ENCODE measurements at regions of chr6 and their contacts with region 1.

Region 1: DNA sequence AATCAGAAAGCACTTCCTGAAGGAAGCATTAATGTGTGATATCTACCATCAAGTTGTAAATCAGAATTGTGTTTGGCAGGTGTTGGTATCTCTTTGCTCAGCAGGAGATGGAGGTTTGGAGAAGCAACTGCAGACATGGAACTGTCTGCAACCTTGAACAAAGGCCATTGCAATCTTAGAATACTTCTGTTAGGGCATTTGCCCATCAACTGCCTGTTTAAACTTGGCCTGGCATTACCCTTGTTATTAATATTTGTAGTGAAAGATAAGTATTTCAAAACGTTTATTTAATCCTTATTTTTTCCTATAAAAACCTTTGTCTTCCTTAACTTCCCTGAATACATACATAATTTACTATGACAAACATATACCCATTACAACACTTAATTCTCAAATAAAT is 14.1 kb downstream of the GSTA5 start:
- DNase-seq: no peak
- H3K4me3 ChIP-seq: no peak overlapping the region
- H3K27ac ChIP-seq: no peak overlapping the region
- H3K4me1 ChIP-seq: no peaks in the 10 kb centered on the region
- H3K27me3 ChIP-seq: peaks cover 0 to 6% (median 0%) of the 10 kb centered on the region in 7 donors
- CTCF ChIP-seq: no peak
- POLR2A ChIP-seq: no peak

Region 2: GRCh38 chr6:51805517-51805916 is 1021.0 kb before region 1 on chr6:
- intact Hi-C with region 1: no loop called
- DNase-seq: no peak
- H3K4me3 ChIP-seq: no peak overlapping the region
- H3K27ac ChIP-seq: no peak overlapping the region
- H3K4me1 ChIP-seq: no peaks in the 10 kb centered on the region
- H3K27me3 ChIP-seq: no peaks in the 10 kb centered on the region
- CTCF ChIP-seq: no peak
- POLR2A ChIP-seq: no peak

Region 3: DNA sequence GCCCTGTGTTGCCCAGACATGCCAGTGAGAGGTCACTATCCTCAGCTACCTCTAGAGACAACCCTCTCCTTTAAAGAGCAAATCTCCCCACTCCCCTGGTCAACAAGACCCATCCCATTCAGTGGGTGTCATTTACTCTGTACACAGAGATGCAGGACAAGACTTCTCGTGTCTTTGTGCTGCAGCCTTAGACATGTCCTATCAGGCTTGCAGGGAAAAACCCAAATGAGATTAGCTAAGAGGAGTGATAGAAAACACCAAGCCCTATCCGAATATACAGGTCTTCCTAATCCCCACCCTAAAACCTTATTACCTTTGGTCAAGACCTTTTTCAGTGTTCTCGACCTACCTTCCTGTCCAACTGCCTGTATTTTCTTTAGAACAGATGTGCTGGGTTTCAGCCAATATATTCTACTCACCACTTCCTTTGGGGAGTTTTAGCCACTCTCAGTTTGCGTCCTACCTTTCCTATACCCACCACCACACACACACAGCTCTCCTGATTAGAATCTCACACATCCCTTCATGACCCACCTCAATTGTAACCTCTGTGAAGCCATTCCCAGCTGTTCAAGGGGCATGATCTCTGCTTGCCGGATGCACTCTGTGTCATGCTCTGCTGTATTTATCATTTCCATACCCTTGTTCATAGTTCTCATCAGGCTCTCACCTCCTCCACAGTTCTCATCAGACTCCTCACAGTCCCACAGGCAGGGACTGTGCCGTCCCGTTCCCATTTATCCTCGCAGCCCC is 289.3 kb before region 1 on chr6:
- intact Hi-C with region 1: no loop called
- DNase-seq: no peak
- H3K4me3 ChIP-seq: no peak overlapping the region
- H3K27ac ChIP-seq: peak overlapping the region in 6 of 8 donors; percentile 5 to 73 (median 52)
- H3K4me1 ChIP-seq: peaks cover 6 to 76% (median 31%) of the 10 kb centered on the region in 6 donors
- H3K27me3 ChIP-seq: no peaks in the 10 kb centered on the region
- CTCF ChIP-seq: no peak
- POLR2A ChIP-seq: no peak

Region 4: GRCh38 chr6:52787917-52788316 is 38.6 kb before region 1 on chr6:
- intact Hi-C with region 1: loop called (anchors 2 kb)
- DNase-seq: no peak
- H3K4me3 ChIP-seq: no peak overlapping the region
- H3K27ac ChIP-seq: no peak overlapping the region
- H3K4me1 ChIP-seq: no peaks in the 10 kb centered on the region
- H3K27me3 ChIP-seq: no peaks in the 10 kb centered on the region
- CTCF ChIP-seq: no peak
- POLR2A ChIP-seq: no peak